ENCODE measurements at regions of chr3 and their contacts with region 1.

Region 1: DNA sequence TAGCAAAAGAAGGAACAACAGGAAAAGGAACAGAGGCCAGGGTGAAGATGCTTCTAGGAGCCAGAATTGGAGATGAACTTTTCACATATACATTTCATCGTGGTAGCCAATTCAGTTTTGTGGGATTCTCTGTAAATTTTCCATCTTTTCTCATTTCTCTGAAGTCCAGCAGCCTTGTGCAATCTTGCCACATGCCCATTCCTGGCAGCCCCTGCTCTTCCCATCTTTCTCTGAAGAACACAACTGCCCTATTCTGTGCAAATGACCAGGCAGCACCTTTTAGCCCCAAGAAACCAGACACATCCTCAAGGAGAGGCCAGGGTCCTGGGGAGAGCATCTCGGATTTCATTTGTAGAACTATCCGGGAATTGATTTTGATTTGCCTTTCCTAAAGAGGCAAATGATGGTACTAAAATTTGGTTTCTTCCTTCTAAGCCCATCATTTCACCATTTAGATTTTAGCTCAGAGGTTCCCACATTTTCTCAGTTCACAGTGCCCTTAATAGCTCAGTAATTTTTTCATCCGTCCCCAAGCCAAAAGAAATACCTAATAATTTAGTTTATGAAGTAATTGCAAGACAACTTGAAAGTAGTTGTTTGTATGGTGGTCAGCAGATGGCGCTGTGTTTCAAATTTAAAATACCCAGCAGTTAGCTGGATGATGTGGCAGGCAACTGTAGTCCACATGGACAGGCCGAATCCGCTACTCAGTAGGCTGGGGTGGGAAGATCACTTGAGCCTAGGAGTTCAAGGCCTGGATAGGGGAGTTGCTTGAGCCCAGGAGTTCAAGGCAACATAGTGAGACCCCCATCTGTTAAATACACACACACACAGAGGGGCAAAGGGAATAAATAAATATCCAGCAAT is 61.3 kb upstream of the ACKR4 start:
- DNase-seq: no peak

Region 2: GRCh38 chr3:132641837-132642538 is 106.2 kb after region 1 on chr3:
- intact Hi-C with region 1: loop called (anchors 2 kb)
- DNase-seq: no peak

Measured in cardiac septum (tissue), 1 donor.